AG04450 (cell line): ENCODE measurements at regions of chr3 and their contacts with region 1.

Region 1: DNA sequence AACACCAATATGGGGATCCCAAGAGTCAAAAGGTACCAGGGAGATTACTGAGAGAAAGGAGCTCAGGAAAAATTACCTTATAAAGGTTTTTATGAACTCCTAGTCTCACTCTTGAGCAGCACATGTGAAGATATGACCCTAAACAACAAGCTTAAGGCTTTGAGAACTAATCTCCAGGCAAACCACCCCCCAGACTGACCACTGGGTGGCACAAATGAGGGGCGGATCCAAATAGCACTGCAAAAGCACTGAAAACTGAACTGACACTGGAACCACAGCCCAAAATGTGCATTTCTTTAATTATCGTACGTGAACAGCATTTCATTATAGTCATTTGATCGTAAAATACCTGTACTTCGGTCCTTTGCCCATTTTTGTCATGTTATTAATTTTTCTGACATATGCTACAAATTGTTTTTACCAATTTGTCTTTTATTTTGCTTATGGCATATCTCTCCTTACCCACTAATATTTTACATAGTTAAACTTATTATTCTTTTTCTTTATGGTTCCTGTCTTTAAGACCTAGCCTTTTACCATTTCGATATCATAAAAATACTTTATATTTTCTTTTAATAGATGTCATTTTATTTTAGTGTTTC is 31.5 kb upstream of the TFDP2 start:
- DNase-seq: no peak
- H3K4me3 ChIP-seq: no peak overlapping the region
- H3K27ac ChIP-seq: no peak overlapping the region
- H3K27me3 ChIP-seq: no peaks in the 10 kb centered on the region
- CTCF ChIP-seq: peak; percentile 65

Region 2: DNA sequence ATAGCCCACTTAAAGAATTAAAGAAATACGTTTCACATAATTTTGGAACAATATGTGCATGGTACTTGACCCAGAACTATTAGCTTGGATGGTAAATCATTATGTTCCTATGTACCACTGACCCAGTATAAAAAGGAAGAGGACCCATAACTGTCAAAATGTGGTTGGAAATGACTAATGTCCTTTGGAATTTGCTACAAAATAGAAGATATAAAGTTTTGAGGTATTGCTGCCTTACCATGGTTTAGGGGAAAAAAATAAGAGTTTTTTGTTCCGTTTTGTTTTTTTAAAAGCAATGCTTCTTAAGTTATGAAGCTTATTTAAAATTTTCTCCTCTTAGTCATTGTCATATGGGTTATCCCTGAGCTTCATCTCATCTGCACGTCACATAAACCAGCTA is 15.7 kb before region 1 on chr3:
- CTCF ChIA-PET with region 1: interaction called, 13 read pairs
- POLR2A ChIA-PET with region 1: no interaction called
- DNase-seq: no peak
- H3K4me3 ChIP-seq: no peak overlapping the region
- H3K27ac ChIP-seq: no peak overlapping the region
- H3K27me3 ChIP-seq: no peaks in the 10 kb centered on the region
- CTCF ChIP-seq: no peak

Region 3: GRCh38 chr3:142211035-142211434 is 30.2 kb after region 1 on chr3:
- CTCF ChIA-PET with region 1: interaction called, 11 read pairs
- POLR2A ChIA-PET with region 1: no interaction called
- DNase-seq: no peak
- H3K4me3 ChIP-seq: no peak overlapping the region
- H3K27ac ChIP-seq: no peak overlapping the region
- H3K27me3 ChIP-seq: no peaks in the 10 kb centered on the region
- CTCF ChIP-seq: peak; percentile 26; the same call in 1 of the 2 replicates